ENCODE measurements at regions of chr14 and their contacts with region 1.

Region 1: DNA sequence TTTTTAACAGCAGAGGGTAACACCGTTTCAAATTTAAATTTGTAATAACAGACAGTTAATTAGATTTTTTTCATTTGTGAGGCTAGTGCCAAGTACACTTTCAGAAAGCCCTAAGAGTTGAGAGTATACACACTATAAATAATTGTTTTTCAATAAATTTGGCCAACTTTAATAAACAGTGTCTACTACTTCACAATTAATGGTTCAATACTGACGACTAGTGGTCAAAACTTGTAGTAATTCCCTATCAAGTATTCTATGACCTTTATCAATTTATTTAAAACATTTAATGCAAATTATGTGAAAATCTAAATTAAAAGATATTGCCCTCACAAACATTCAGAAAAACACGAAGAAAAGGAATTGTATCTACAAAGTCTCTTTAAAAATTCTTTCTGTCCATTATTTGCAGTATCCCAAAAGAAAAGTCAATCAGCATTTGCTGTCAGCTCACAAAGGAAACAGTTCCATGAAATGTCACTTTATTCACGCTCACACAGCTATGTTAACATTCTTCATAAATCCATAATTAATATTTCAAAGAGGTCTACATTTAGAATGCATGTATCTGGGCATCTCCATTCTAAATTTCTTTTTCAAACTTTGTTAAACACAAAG is 91.2 kb downstream of the CEP128 start:
- DNase-seq: no peak
- ATAC-seq: no peak
- H3K4me3 Mint-ChIP-seq: no peak overlapping the region
- H3K27ac Mint-ChIP-seq: no peak overlapping the region
- H3K4me1 Mint-ChIP-seq: no peaks in the 10 kb centered on the region
- H3K27me3 Mint-ChIP-seq: no peaks in the 10 kb centered on the region

Region 2: GRCh38 chr14:78959674-78960264 is 1890.5 kb before region 1 on chr14:
- CTCF ChIA-PET with region 1: no interaction called
- POLR2A ChIA-PET with region 1: no interaction called
- intact Hi-C with region 1: loop called in 1 of 2 experiments (anchors 5 kb)
- DNase-seq: peak; percentile 67
- ATAC-seq: no peak
- H3K4me3 Mint-ChIP-seq: no peak overlapping the region
- H3K27ac Mint-ChIP-seq: no peak overlapping the region
- H3K4me1 Mint-ChIP-seq: no peaks in the 10 kb centered on the region
- H3K27me3 Mint-ChIP-seq: no peaks in the 10 kb centered on the region

Region 3: GRCh38 chr14:79011091-79011919 is 1839.0 kb before region 1 on chr14:
- CTCF ChIA-PET with region 1: no interaction called
- POLR2A ChIA-PET with region 1: no interaction called
- intact Hi-C with region 1: loop called in 1 of 2 experiments (anchors 5 kb)
- DNase-seq: peak; percentile 5
- ATAC-seq: no peak
- H3K4me3 Mint-ChIP-seq: no peak overlapping the region
- H3K27ac Mint-ChIP-seq: no peak overlapping the region
- H3K4me1 Mint-ChIP-seq: no peaks in the 10 kb centered on the region
- H3K27me3 Mint-ChIP-seq: no peaks in the 10 kb centered on the region

Region 4: DNA sequence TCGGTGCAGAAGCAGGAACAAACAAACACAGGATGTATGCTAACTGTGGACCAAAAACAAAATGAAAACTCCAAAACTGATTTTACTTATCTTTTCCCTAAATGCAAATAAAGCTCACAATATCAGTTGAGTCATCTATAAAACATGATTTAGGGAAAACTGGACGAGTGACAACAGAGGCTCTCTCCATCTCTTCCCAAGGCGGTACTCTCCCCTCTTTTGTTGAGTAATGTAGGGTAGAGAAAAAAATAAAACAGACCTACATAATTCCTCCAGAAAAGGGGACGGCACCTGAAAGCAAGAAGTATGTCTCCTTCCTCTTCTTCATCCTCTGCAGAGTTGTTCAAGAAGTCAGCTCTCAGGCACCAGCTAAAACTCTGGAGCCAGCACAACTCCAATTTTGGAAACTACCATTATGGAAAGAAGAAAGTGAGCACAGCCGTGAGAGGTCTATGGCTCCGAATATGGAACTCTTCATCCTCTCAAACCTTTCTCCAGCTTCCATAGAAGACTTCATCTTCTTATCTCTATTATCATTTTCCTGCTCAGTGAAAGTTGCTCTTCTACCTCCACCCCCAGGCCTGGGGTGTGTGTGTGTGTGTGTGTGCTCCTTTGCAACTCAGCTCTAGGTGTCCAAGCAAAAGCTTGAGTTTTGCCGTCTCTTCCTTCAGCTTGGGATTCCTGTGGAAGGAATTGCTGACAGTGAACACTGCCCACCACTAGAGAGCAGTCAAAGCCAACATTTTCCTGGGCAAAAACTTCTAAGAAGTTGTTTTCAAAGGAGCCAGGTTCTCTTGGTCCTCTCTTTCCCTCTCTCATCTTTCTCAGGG is 794.4 kb before region 1 on chr14:
- CTCF ChIA-PET with region 1: interaction called, 3 read pairs
- POLR2A ChIA-PET with region 1: no interaction called
- intact Hi-C with region 1: loop called (anchors 2 to 5 kb)
- DNase-seq: peak; percentile 6
- ATAC-seq: no peak
- H3K4me3 Mint-ChIP-seq: no peak overlapping the region
- H3K27ac Mint-ChIP-seq: no peak overlapping the region
- H3K4me1 Mint-ChIP-seq: no peaks in the 10 kb centered on the region
- H3K27me3 Mint-ChIP-seq: peaks cover 4% of the 10 kb centered on the region

Region 5: GRCh38 chr14:80213599-80213998 is 636.7 kb before region 1 on chr14:
- CTCF ChIA-PET with region 1: interaction called, 4 read pairs
- POLR2A ChIA-PET with region 1: no interaction called
- intact Hi-C with region 1: loop called (anchors 1 to 5 kb)
- DNase-seq: peak; percentile 30
- ATAC-seq: no peak
- H3K4me3 Mint-ChIP-seq: no peak overlapping the region
- H3K27ac Mint-ChIP-seq: no peak overlapping the region
- H3K4me1 Mint-ChIP-seq: no peaks in the 10 kb centered on the region
- H3K27me3 Mint-ChIP-seq: peaks cover 1% of the 10 kb centered on the region

Region 6: GRCh38 chr14:80839743-80840142 is 10.6 kb before region 1 on chr14:
- CTCF ChIA-PET with region 1: interaction called, 19 read pairs
- POLR2A ChIA-PET with region 1: no interaction called
- intact Hi-C with region 1: no loop called
- DNase-seq: no peak
- ATAC-seq: no peak
- H3K4me3 Mint-ChIP-seq: no peak overlapping the region
- H3K27ac Mint-ChIP-seq: no peak overlapping the region
- H3K4me1 Mint-ChIP-seq: no peaks in the 10 kb centered on the region
- H3K27me3 Mint-ChIP-seq: no peaks in the 10 kb centered on the region

Region 7: GRCh38 chr14:80923368-80923767 is 73.1 kb after region 1 on chr14:
- CTCF ChIA-PET with region 1: no interaction called
- POLR2A ChIA-PET with region 1: no interaction called
- intact Hi-C with region 1: no loop called
- DNase-seq: no peak
- ATAC-seq: no peak
- H3K4me3 Mint-ChIP-seq: no peak overlapping the region
- H3K27ac Mint-ChIP-seq: no peak overlapping the region
- H3K4me1 Mint-ChIP-seq: peaks cover 3% of the 10 kb centered on the region
- H3K27me3 Mint-ChIP-seq: no peaks in the 10 kb centered on the region